Panc1 (cell line): ENCODE measurements at regions of chr2 and their contacts with region 1.

Region 1: GRCh38 chr2:118882709-118883210 is 35.3 kb upstream of the EN1 start:
- DNase-seq: peak; percentile 80
- ATAC-seq: peak; percentile 85
- H3K4me3 ChIP-seq: peak overlapping the region; percentile 13 to 47; a peak in 3 of 4 replicates
- H3K27ac ChIP-seq: no peak overlapping the region
- H3K4me1 ChIP-seq: peaks cover 6% of the 10 kb centered on the region
- H3K27me3 ChIP-seq: peaks cover 12% of the 10 kb centered on the region
- CTCF ChIP-seq: peak; percentile 96

Region 2: DNA sequence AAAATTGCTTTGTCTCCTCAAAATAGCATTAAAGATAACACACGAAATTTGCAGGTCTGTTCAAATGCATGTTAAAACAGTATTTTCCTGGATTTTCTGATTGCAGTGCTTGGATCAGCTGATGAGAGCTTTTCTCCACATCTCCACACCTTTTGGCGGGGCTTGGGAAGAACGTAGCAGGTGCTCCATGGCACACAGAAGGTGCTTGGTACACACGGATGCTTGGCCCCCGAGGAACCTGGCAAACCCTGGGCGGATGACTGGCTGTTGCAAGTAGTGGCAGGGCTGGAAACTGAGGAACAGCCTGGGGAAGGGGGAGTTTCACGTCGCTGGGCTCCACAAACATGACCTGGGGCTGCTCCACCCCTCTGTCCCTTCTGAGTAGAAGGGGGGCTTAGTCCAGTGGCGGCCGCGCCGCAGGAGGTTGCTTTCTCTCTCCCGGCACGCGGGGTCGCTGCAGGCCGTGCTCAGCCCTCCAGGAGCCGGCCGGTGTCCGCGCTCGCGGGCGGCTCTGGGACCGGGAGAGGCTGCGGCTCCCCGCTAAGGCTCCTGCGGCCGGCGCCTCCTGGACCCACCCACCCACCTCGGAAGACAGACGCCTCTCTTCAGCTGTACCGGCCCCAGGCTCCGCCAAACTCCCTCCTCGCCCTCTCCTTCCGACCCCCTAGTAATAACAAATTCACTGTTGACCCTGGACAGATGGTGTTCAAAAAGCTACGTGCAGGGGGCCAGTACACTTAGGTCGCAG is 128.6 kb after region 1 on chr2:
- CTCF ChIA-PET with region 1: interaction called, 8 read pairs
- POLR2A ChIA-PET with region 1: no interaction called
- in situ Hi-C with region 1: no loop called
- intact Hi-C with region 1: loop called (anchors 2 kb)
- DNase-seq: no peak
- ATAC-seq: peak; percentile 95
- H3K4me3 ChIP-seq: peak overlapping the region; percentile 13 to 33; a peak in 3 of 4 replicates
- H3K27ac ChIP-seq: no peak overlapping the region
- H3K4me1 ChIP-seq: no peaks in the 10 kb centered on the region
- H3K27me3 ChIP-seq: peaks cover 29% of the 10 kb centered on the region
- CTCF ChIP-seq: peak; percentile 90

Region 3: DNA sequence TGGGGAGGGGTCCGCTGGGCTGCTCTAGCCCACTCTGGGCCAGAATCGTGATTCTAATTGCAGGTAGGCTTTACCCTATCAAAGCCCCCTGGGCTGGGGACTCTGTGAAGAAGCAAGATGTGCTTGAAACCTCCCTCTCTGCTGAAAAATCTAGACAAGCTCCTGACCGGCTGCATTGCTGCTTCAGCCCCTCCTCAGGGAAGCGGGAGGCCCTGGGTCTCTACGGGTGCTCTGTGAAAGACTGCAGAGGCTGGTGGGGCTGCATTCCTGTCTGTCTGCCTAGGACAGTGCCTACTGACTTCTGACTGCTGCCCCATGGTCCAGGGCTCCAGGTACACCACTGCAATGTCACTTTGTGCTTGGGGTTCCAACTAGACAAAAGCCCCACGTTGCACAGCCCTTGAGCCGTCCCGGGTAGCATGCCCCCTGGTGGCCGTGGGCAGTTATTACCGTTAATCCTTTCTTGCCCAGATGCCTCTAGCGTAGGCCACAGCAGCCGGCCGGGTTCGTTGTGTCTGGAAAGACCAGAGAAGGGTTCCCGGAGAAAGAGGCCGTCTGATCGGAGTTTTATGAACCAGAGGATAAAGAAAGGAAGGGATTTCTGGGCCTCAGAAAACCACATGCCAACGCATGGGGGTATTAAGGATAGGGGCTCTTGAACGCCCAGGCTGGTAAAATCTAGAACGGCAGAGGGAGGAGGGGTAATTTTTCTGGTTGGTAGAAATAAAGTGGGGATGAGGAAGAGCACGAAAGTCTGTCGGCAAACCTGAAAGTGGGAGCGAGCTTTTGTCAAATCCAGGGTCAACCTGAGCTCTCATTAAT is 291.7 kb after region 1 on chr2:
- CTCF ChIA-PET with region 1: no interaction called
- POLR2A ChIA-PET with region 1: no interaction called
- in situ Hi-C with region 1: no loop called
- intact Hi-C with region 1: loop called (anchors 5 kb)
- DNase-seq: no peak
- ATAC-seq: peak; percentile 97
- H3K4me3 ChIP-seq: peak overlapping the region in 1 of 2 experiments; percentile 18; a peak in 2 of 4 replicates
- H3K27ac ChIP-seq: no peak overlapping the region
- H3K4me1 ChIP-seq: no peaks in the 10 kb centered on the region; the same call in 1 of the 2 replicates
- H3K27me3 ChIP-seq: no peaks in the 10 kb centered on the region
- CTCF ChIP-seq: peak; percentile 96

Region 4: DNA sequence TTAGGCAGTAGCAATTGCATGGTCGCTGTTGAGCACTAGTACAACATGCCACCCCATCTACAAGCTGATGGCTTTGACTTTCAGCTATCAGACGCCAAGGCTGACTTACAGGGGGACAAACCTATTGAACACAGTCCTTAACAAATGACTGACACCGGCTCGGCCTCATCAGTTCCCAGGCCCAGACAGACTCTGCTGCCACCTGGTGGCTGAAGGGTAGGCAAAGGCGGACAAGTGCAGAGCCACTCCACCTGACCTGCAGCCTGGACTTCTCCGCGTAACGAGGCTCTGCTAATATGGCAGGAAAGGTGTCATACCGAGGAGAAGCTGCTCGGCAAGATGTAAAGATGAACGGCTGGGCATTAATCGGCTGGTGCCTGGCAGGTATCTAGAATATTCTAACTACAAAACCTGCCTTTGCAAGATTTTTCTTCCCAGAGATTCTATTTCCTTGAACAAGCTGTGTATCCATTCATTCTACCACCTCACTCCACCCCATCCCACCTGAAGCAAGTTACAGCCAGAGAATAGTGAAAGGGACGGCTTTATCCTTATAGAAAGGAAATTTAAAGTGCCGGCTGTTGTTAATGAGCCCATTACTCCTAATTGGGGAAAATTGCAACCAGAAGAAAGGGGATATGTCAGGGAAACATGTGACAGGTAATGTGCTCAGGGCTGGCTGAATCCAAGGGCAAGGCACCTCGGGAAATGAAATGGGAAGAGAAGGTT is 408.3 kb after region 1 on chr2:
- CTCF ChIA-PET with region 1: no interaction called
- POLR2A ChIA-PET with region 1: no interaction called
- in situ Hi-C with region 1: no loop called
- intact Hi-C with region 1: loop called (anchors 2 kb)
- DNase-seq: peak; percentile 24
- ATAC-seq: peak; percentile 98
- H3K4me3 ChIP-seq: no peak overlapping the region
- H3K27ac ChIP-seq: no peak overlapping the region
- H3K4me1 ChIP-seq: peaks cover 3% of the 10 kb centered on the region; the same call in 1 of the 2 replicates
- H3K27me3 ChIP-seq: no peaks in the 10 kb centered on the region
- CTCF ChIP-seq: peak; percentile 91